ENCODE measurements at regions of chr1 and their contacts with region 1.

Region 1: GRCh38 chr1:230375780-230376179 is 50.4 kb downstream of the PGBD5 start:
- DNase-seq: no peak

Region 2: GRCh38 chr1:230243583-230244353 is 132.0 kb before region 1 on chr1:
- intact Hi-C with region 1: no loop called
- DNase-seq: no peak

Region 3: GRCh38 chr1:230594214-230594773 is 218.5 kb after region 1 on chr1:
- intact Hi-C with region 1: loop called in 1 of 2 experiments (anchors 5 kb)
- DNase-seq: no peak

Region 4: GRCh38 chr1:230922620-230923019 is 546.8 kb after region 1 on chr1:
- intact Hi-C with region 1: no loop called
- DNase-seq: no peak